ENCODE measurements at regions of chr12 and their contacts with region 1.

Region 1: DNA sequence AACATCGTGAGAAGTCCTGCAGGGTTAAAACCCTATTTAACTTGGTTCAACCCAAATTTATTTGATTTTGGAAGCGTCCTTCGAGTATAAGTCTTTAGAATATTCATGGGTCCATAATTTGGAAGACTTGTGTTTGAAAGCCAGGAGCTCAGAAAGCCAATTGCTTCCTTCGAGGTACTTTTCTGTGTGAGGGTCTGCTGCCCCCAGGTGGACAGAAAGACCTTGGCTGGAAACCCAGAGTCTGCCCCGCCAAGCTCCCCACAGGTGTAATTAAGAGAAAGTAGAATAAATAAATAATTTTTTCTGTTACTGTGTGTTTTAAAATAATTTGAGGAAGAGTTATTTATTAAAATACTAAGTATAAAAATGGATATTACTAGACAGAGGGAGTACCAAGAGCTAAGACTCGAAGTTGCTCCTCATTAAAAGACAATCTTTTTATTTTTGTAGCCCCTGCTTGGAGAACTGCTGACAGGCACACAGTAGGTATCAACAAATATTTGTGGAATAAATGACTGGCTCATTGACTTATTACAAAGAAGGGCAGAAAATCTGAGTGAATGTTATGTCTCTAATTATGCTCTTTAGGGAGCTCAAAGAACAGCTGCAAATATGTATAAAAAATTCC is 105.8 kb downstream of the PAH start:
- DNase-seq: no peak
- ATAC-seq: peak; percentile 74
- H3K4me3 ChIP-seq: no peak overlapping the region
- H3K27ac ChIP-seq: no peak overlapping the region
- H3K4me1 ChIP-seq: no peaks in the 10 kb centered on the region
- H3K27me3 ChIP-seq: no peaks in the 10 kb centered on the region; a peak in 1 of 4 replicates
- CTCF ChIP-seq: peak; percentile 63 to 66 (median 64); a peak in 5 of 6 replicates
- EP300 ChIP-seq: no peak
- POLR2A ChIP-seq: no peak
- RAD21 ChIP-seq: peak; percentile 77

Region 2: GRCh38 chr12:102169922-102170621 is 641.2 kb before region 1 on chr12:
- CTCF ChIA-PET with region 1: interaction called, 28 read pairs
- POLR2A ChIA-PET with region 1: no interaction called
- RAD21 ChIA-PET with region 1: interaction called, 4 read pairs
- SMC1A ChIA-PET with region 1: interaction called, 5 read pairs
- in situ Hi-C with region 1: no loop called
- intact Hi-C with region 1: no loop called
- DNase-seq: no peak
- ATAC-seq: peak; percentile 73
- H3K4me3 ChIP-seq: no peak overlapping the region
- H3K27ac ChIP-seq: no peak overlapping the region
- H3K4me1 ChIP-seq: peaks cover 5% of the 10 kb centered on the region
- H3K27me3 ChIP-seq: no peaks in the 10 kb centered on the region
- CTCF ChIP-seq: peak; percentile 72 to 79 (median 78)
- EP300 ChIP-seq: no peak
- POLR2A ChIP-seq: no peak
- RAD21 ChIP-seq: peak; percentile 80

Region 3: GRCh38 chr12:102300824-102301461 is 510.3 kb before region 1 on chr12:
- CTCF ChIA-PET with region 1: interaction called, 11 read pairs
- POLR2A ChIA-PET with region 1: no interaction called
- RAD21 ChIA-PET with region 1: interaction called, 8 read pairs
- SMC1A ChIA-PET with region 1: interaction called, 7 read pairs
- in situ Hi-C with region 1: no loop called
- intact Hi-C with region 1: no loop called
- DNase-seq: peak; percentile 61
- ATAC-seq: peak; percentile 98
- H3K4me3 ChIP-seq: no peak overlapping the region
- H3K27ac ChIP-seq: no peak overlapping the region
- H3K4me1 ChIP-seq: no peaks in the 10 kb centered on the region
- H3K27me3 ChIP-seq: no peaks in the 10 kb centered on the region
- CTCF ChIP-seq: peak; percentile 41 to 47 (median 42); a peak in 4 of 6 replicates
- EP300 ChIP-seq: no peak
- POLR2A ChIP-seq: no peak
- RAD21 ChIP-seq: peak; percentile 57

Region 4: GRCh38 chr12:102394200-102394599 is 417.0 kb before region 1 on chr12:
- CTCF ChIA-PET with region 1: no interaction called
- POLR2A ChIA-PET with region 1: no interaction called
- RAD21 ChIA-PET with region 1: no interaction called
- SMC1A ChIA-PET with region 1: no interaction called
- in situ Hi-C with region 1: no loop called
- intact Hi-C with region 1: no loop called
- DNase-seq: no peak
- ATAC-seq: no peak
- H3K4me3 ChIP-seq: no peak overlapping the region
- H3K27ac ChIP-seq: no peak overlapping the region
- H3K4me1 ChIP-seq: no peaks in the 10 kb centered on the region
- H3K27me3 ChIP-seq: no peaks in the 10 kb centered on the region
- CTCF ChIP-seq: no peak
- EP300 ChIP-seq: no peak
- POLR2A ChIP-seq: no peak
- RAD21 ChIP-seq: no peak

Region 5: DNA sequence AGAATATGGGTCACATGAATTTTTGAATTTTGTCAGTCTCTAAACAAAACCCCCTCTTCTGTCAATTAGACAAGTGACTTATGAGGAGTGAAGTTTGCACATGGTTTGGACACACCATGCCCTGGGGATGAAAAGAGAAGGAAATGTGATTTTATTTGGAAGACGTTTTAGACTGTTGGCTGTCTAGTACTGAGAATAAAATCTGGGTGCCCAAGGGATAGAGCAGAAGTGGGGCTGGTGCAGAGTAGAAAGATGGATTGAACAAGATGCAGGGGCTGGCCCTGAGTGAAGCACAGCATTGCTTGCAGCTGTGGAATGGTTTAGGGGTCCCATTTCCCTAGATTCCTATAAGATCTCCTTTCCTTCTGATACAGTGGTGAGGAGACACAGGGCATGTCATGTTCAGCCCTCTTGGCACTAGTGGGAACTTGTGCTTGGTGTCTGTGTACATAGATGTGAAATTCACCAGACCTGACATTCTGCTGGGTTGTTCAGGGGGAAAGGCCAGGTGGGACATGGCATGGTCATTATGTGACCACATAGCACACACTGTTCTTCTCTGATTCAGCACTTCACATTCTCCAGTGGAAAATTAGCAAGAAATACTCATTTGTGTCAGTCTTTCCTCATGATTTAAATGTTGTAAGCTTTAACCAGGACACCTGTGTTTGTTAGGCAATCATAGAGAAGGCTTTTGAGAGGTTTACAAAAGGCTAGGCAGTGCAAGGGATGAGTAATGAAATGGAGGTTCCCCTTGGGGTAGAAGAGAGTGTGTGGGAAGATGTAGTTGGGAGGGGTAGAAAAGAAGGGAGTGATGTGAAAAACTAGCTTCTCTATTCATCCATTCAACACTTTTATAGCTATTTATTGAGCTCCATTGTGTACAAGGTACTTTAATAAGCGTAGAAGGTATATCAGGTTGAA is 128.6 kb before region 1 on chr12:
- CTCF ChIA-PET with region 1: no interaction called
- POLR2A ChIA-PET with region 1: no interaction called
- RAD21 ChIA-PET with region 1: no interaction called
- SMC1A ChIA-PET with region 1: no interaction called
- in situ Hi-C with region 1: no loop called
- intact Hi-C with region 1: no loop called
- DNase-seq: no peak
- ATAC-seq: no peak
- H3K4me3 ChIP-seq: no peak overlapping the region
- H3K27ac ChIP-seq: no peak overlapping the region
- H3K4me1 ChIP-seq: no peaks in the 10 kb centered on the region
- H3K27me3 ChIP-seq: no peaks in the 10 kb centered on the region
- CTCF ChIP-seq: no peak
- EP300 ChIP-seq: no peak
- POLR2A ChIP-seq: no peak
- RAD21 ChIP-seq: no peak

Region 6: GRCh38 chr12:102763061-102763460 is 48.2 kb before region 1 on chr12:
- CTCF ChIA-PET with region 1: interaction called, 33 read pairs
- POLR2A ChIA-PET with region 1: no interaction called
- RAD21 ChIA-PET with region 1: interaction called, 8 read pairs
- SMC1A ChIA-PET with region 1: interaction called, 21 read pairs
- in situ Hi-C with region 1: no loop called
- intact Hi-C with region 1: no loop called
- DNase-seq: no peak
- ATAC-seq: no peak
- H3K4me3 ChIP-seq: no peak overlapping the region
- H3K27ac ChIP-seq: no peak overlapping the region
- H3K4me1 ChIP-seq: no peaks in the 10 kb centered on the region
- H3K27me3 ChIP-seq: no peaks in the 10 kb centered on the region
- CTCF ChIP-seq: no peak
- EP300 ChIP-seq: no peak
- POLR2A ChIP-seq: no peak
- RAD21 ChIP-seq: no peak

Region 7: DNA sequence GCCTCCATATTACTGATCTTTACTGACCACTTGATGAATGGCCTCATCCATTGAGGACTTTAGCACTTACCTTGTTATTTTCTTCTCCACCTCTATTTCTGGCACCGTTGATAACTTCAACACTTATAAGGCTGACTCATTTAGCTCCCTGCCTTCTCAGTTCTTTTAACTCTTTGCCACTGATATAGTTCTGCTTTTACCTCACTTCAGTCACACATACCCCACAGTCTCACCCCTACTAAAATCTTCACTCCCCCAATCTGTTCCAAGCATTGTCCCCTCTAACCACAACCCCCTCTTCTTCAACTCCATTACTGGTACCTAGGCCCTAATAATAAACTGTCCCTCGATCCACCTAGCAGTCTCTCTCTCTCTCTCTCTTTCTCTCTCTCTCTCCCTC is 35.2 kb before region 1 on chr12:
- CTCF ChIA-PET with region 1: interaction called, 33 read pairs
- POLR2A ChIA-PET with region 1: no interaction called
- RAD21 ChIA-PET with region 1: interaction called, 14 read pairs
- SMC1A ChIA-PET with region 1: interaction called, 15 read pairs
- in situ Hi-C with region 1: no loop called
- intact Hi-C with region 1: no loop called
- DNase-seq: no peak
- ATAC-seq: peak; percentile 93
- H3K4me3 ChIP-seq: no peak overlapping the region
- H3K27ac ChIP-seq: no peak overlapping the region
- H3K4me1 ChIP-seq: no peaks in the 10 kb centered on the region
- H3K27me3 ChIP-seq: no peaks in the 10 kb centered on the region
- CTCF ChIP-seq: no peak
- EP300 ChIP-seq: peak; percentile 69 to 82; a peak in 3 of 4 replicates
- POLR2A ChIP-seq: no peak
- RAD21 ChIP-seq: no peak

Region 8: GRCh38 chr12:102793921-102794320 is 17.3 kb before region 1 on chr12:
- CTCF ChIA-PET with region 1: interaction called, 10 read pairs
- POLR2A ChIA-PET with region 1: no interaction called
- RAD21 ChIA-PET with region 1: interaction called, 3 read pairs
- SMC1A ChIA-PET with region 1: interaction called, 4 read pairs
- in situ Hi-C with region 1: no loop called
- intact Hi-C with region 1: no loop called
- DNase-seq: no peak
- ATAC-seq: no peak
- H3K4me3 ChIP-seq: no peak overlapping the region
- H3K27ac ChIP-seq: no peak overlapping the region
- H3K4me1 ChIP-seq: no peaks in the 10 kb centered on the region
- H3K27me3 ChIP-seq: peaks cover 0 to under 1% of the 10 kb centered on the region in 2 experiments; a peak in 3 of 4 replicates
- CTCF ChIP-seq: no peak
- EP300 ChIP-seq: no peak
- POLR2A ChIP-seq: no peak
- RAD21 ChIP-seq: no peak

Measured in GM12878 (cell line).